ENCODE measurements at regions of chrX and their contacts with region 1.

Region 1: GRCh38 chrX:17590892-17591740 is 146.2 kb upstream of the SCML1 start:
- DNase-seq: peak; percentile 49
- H3K4me3 ChIP-seq: peak overlapping the region; percentile 10 to 44; a peak in 3 of 4 replicates
- H3K27ac ChIP-seq: peak overlapping the region in 1 of 2 experiments; percentile 77; a peak in 2 of 4 replicates
- H3K4me1 ChIP-seq: 0 out of 4 replicates have a peak, but pooled peaks cover 0 to 4% of the 10 kb centered on the region in 2 experiments
- H3K27me3 ChIP-seq: no peaks in the 10 kb centered on the region
- CTCF ChIP-seq: peak; percentile 84
- EP300 ChIP-seq: no peak
- RAD21 ChIP-seq: peak; percentile 87

Region 2: DNA sequence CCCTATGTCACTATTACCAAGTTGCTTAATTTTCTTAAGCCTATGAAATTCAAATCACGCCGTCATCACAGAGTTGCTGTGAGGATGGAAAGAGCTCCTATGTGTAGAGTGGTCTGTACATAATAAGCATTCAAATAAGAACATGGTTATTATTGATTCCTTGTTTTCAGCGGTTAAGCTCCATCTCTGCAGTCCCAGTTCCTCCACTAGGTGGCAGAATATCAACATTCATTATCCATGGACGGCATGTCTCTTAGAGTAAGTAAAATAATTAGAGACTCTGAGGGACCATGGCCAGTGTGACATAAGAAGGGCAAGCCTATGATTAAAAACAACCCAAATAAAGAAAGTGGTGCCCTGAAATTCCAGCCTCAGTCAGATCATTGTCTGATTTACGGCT is 348.6 kb before region 1 on chrX:
- CTCF ChIA-PET with region 1: interaction called, 27 read pairs
- POLR2A ChIA-PET with region 1: no interaction called
- DNase-seq: peak; percentile 57
- H3K4me3 ChIP-seq: no peak overlapping the region
- H3K27ac ChIP-seq: no peak overlapping the region
- H3K4me1 ChIP-seq: no peaks in the 10 kb centered on the region
- H3K27me3 ChIP-seq: no peaks in the 10 kb centered on the region
- CTCF ChIP-seq: peak; percentile 91
- EP300 ChIP-seq: no peak
- RAD21 ChIP-seq: peak; percentile 80

Region 3: DNA sequence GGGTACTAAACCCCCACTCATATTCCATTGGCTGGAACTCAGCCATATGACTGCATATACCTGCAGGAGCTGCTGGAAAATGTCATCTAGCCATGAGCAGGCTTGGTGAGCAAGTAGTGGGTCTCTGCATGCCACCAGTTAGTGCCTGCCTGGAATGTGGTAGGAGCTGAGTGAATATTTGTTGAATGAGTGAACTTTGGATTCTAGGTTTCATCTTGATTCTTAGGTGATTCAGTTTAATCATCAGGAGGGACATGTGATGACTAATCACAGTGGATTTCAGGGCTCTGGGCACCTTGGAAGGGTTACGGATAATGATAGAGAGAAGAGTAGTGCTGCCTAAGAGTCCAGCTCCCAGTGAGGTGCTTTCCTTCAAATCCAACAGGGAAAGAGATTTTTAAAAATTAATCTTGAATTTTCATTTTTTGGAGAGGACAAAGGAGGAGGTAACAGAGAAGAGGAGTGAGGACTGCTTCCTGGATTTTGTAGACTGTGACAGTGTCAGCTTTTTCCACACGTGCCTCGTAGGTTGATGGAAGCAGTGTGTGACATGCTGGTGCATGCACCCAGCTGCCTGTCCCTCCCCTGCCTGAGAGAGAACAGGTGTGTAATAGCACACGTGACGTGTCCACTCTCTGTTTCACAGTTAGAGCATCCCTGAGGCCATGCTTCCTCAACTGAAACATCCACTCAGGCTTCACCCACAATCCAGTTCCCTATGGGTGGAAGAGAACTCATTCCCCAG is 185.7 kb before region 1 on chrX:
- CTCF ChIA-PET with region 1: no interaction called
- POLR2A ChIA-PET with region 1: no interaction called
- DNase-seq: no peak
- H3K4me3 ChIP-seq: no peak overlapping the region
- H3K27ac ChIP-seq: peak overlapping the region in 1 of 2 experiments; percentile 41; a peak in 2 of 4 replicates
- H3K4me1 ChIP-seq: 0 out of 4 replicates have a peak, but pooled peaks cover 0 to 10% of the 10 kb centered on the region in 2 experiments
- H3K27me3 ChIP-seq: no peaks in the 10 kb centered on the region
- CTCF ChIP-seq: no peak
- EP300 ChIP-seq: peak in 1 of 2 experiments; percentile 89; a peak in 1 of 4 replicates
- RAD21 ChIP-seq: no peak

Region 4: GRCh38 chrX:17521871-17522693 is 69.0 kb before region 1 on chrX:
- CTCF ChIA-PET with region 1: interaction called, 14 read pairs
- POLR2A ChIA-PET with region 1: no interaction called
- DNase-seq: peak; percentile 62
- H3K4me3 ChIP-seq: no peak overlapping the region
- H3K27ac ChIP-seq: no peak overlapping the region; a peak in 1 of 4 replicates
- H3K4me1 ChIP-seq: peaks cover 0 to 7% of the 10 kb centered on the region in 2 experiments; a peak in 2 of 4 replicates
- H3K27me3 ChIP-seq: no peaks in the 10 kb centered on the region
- CTCF ChIP-seq: no peak
- EP300 ChIP-seq: no peak
- RAD21 ChIP-seq: no peak

Region 5: GRCh38 chrX:17580539-17581152 is 10.5 kb before region 1 on chrX:
- CTCF ChIA-PET with region 1: interaction called, 10 read pairs
- POLR2A ChIA-PET with region 1: no interaction called
- DNase-seq: no peak
- H3K4me3 ChIP-seq: no peak overlapping the region; a peak in 1 of 4 replicates
- H3K27ac ChIP-seq: peak overlapping the region; percentile 68 to 79
- H3K4me1 ChIP-seq: peaks cover 3 to 11% of the 10 kb centered on the region in 2 experiments; a peak in 3 of 4 replicates
- H3K27me3 ChIP-seq: no peaks in the 10 kb centered on the region
- CTCF ChIP-seq: no peak
- EP300 ChIP-seq: no peak
- RAD21 ChIP-seq: no peak

Region 6: GRCh38 chrX:17605676-17606075 is 14.6 kb after region 1 on chrX:
- CTCF ChIA-PET with region 1: interaction called, 16 read pairs
- POLR2A ChIA-PET with region 1: no interaction called
- DNase-seq: no peak
- H3K4me3 ChIP-seq: no peak overlapping the region
- H3K27ac ChIP-seq: no peak overlapping the region
- H3K4me1 ChIP-seq: no peaks in the 10 kb centered on the region; a peak in 1 of 4 replicates
- H3K27me3 ChIP-seq: no peaks in the 10 kb centered on the region
- CTCF ChIP-seq: no peak
- EP300 ChIP-seq: no peak
- RAD21 ChIP-seq: no peak